ENCODE measurements at regions of chr3 and their contacts with region 1.

Region 1: GRCh38 chr3:46860017-46860830 is 3.0 kb downstream of the MYL3 start:
- DNase-seq: peak; percentile 61 to 72
- H3K4me3 ChIP-seq: no peak overlapping the region
- H3K4me3 Mint-ChIP-seq: no peak overlapping the region
- H3K27ac Mint-ChIP-seq: no peak overlapping the region
- H3K4me1 ChIP-seq: peaks cover 27% of the 10 kb centered on the region
- H3K4me1 Mint-ChIP-seq: peaks cover 22% of the 10 kb centered on the region
- H3K27me3 ChIP-seq: no peaks in the 10 kb centered on the region
- H3K27me3 Mint-ChIP-seq: no peaks in the 10 kb centered on the region
- CTCF ChIP-seq: peak; percentile 66 to 67

Region 2: GRCh38 chr3:46705022-46705530 is 155.1 kb before region 1 on chr3:
- CTCF ChIA-PET with region 1: no interaction called
- POLR2A ChIA-PET with region 1: no interaction called
- intact Hi-C with region 1: loop called (anchors 2 kb)
- DNase-seq: peak; percentile 78 to 79
- H3K4me3 ChIP-seq: no peak overlapping the region
- H3K4me3 Mint-ChIP-seq: no peak overlapping the region
- H3K27ac Mint-ChIP-seq: no peak overlapping the region
- H3K4me1 ChIP-seq: no peaks in the 10 kb centered on the region
- H3K4me1 Mint-ChIP-seq: no peaks in the 10 kb centered on the region
- H3K27me3 ChIP-seq: no peaks in the 10 kb centered on the region; the same call in 1 of the 2 replicates
- H3K27me3 Mint-ChIP-seq: peaks cover 6% of the 10 kb centered on the region
- CTCF ChIP-seq: peak; percentile 91 to 95

Region 3: DNA sequence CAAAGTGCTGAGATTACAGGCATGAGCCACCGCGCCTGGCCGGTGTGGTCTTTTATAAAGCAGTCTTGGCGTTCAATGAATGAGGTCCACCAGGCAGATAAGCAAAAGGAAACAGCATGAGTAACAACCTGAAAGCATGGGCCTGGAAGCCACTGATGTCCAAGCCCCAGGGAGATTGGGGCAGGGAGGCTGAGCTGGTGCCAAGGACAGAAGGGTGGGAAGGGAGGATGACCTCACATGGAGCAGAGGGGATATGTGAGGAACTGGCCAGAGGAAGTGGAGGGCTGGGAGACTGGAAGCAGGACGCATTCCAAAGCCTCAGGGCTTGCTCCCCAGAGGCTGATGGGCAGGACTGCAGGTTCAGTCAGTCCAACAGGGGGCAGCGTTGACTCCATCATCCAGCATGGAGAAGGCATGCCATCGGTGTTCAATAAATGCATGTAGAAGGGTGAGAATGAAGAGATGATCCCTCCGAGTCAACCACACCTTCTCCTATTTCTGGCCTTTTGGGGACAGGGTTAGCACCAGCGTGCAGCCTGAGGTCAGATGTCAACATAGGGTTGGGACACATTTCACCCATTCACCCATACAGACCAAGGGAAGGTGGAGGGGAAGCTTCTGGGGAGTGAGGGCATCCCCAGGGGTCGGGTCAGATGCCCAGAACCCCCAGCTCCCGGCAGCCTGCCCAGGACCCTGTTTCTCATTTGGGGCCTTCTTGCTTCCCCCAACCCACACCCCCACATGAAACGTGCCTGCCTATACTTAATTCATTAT is 11.8 kb before region 1 on chr3:
- CTCF ChIA-PET with region 1: no interaction called
- POLR2A ChIA-PET with region 1: no interaction called
- intact Hi-C with region 1: loop called (anchors 2 kb)
- DNase-seq: peak in 1 of 2 experiments; percentile 33
- H3K4me3 ChIP-seq: no peak overlapping the region
- H3K4me3 Mint-ChIP-seq: peak overlapping the region; percentile 21
- H3K27ac Mint-ChIP-seq: peak overlapping the region; percentile 70
- H3K4me1 ChIP-seq: peaks cover 21% of the 10 kb centered on the region
- H3K4me1 Mint-ChIP-seq: peaks cover 16% of the 10 kb centered on the region
- H3K27me3 ChIP-seq: no peaks in the 10 kb centered on the region
- H3K27me3 Mint-ChIP-seq: no peaks in the 10 kb centered on the region
- CTCF ChIP-seq: peak; percentile 31 to 42